ENCODE measurements at regions of chr15 and their contacts with region 1.

Region 1: DNA sequence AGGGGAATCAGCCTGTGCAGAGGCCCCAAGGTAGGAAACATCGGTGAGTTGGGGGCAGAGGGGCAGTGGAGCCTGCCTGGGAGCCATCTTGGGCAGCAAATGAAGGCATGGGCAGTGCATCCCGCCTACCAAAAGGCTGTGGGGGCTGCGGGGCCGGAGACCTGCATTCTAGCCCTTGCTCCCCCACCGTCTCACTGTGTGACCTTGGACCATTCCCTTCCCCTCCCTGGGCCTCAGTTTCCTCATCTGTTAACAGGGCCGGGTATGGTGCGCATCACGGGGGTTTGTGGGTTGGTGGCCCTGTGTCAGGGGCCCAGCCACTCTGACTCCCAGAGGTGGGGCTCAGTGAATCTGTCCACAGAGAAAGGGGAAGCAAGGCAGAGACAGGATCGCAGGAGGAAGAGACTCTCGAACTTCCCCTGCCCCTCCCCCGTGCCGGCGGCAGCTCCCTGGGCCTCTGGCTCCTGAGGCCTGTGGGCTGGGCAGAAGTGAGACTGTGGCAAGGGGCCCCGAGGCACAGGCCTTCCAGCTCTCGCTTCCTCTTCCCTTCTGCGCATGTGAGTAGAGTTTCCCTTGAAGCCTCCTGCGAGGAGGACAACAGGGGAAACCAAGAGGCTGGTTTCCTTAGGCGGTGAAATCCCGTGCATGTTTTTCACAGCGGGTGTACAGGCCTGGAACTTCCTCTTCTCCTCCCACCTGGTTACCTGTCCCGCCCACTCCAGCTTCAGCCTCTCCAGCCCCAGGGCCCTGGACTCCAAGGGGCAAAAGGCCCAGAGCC is 42.9 kb downstream of the IDH2 start:
- DNase-seq: peak; percentile 96
- ATAC-seq: peak; percentile 88
- H3K4me3 ChIP-seq: peak overlapping the region in 1 of 5 experiments; percentile 22
- H3K4me3 Mint-ChIP-seq: peak overlapping the region; percentile 80
- H3K27ac ChIP-seq: peak overlapping the region; percentile 82 to 88
- H3K27ac Mint-ChIP-seq: peak overlapping the region; percentile 98
- H3K4me1 ChIP-seq: peaks cover 54 to 93% of the 10 kb centered on the region in 2 donors
- H3K4me1 Mint-ChIP-seq: peaks cover 81% of the 10 kb centered on the region
- H3K27me3 ChIP-seq: no peaks in the 10 kb centered on the region
- H3K27me3 Mint-ChIP-seq: no peaks in the 10 kb centered on the region
- CTCF ChIP-seq: no peak

Region 2: GRCh38 chr15:89750560-89751542 is 308.5 kb before region 1 on chr15 and contains the start of gene MESP1:
- CTCF ChIA-PET with region 1: no interaction called
- POLR2A ChIA-PET with region 1: no interaction called
- intact Hi-C with region 1: loop called (anchors 1 kb)
- DNase-seq: peak; percentile 93
- ATAC-seq: peak; percentile 96
- H3K4me3 ChIP-seq: peak within 1 kb of the TSS in 4 of 5 experiments; percentile 38 to 75 (median 63)
- H3K4me3 Mint-ChIP-seq: peak within 1 kb of the TSS; percentile 84
- H3K27ac ChIP-seq: peak within 1 kb of the TSS in 1 of 2 donors; percentile 39
- H3K27ac Mint-ChIP-seq: peak within 1 kb of the TSS; percentile 53
- H3K4me1 ChIP-seq: peaks cover 11 to 13% of the 10 kb centered on the region in 2 donors
- H3K4me1 Mint-ChIP-seq: peaks cover 6% of the 10 kb centered on the region
- H3K27me3 ChIP-seq: peaks cover 0 to 10% (median 4%) of the 10 kb centered on the region in 4 experiments
- H3K27me3 Mint-ChIP-seq: peaks cover 19% of the 10 kb centered on the region
- CTCF ChIP-seq: peak; percentile 77
- total RNA-seq, gene MESP1: 0.49 and 0.51 TPM in 2 replicates

Region 3: DNA sequence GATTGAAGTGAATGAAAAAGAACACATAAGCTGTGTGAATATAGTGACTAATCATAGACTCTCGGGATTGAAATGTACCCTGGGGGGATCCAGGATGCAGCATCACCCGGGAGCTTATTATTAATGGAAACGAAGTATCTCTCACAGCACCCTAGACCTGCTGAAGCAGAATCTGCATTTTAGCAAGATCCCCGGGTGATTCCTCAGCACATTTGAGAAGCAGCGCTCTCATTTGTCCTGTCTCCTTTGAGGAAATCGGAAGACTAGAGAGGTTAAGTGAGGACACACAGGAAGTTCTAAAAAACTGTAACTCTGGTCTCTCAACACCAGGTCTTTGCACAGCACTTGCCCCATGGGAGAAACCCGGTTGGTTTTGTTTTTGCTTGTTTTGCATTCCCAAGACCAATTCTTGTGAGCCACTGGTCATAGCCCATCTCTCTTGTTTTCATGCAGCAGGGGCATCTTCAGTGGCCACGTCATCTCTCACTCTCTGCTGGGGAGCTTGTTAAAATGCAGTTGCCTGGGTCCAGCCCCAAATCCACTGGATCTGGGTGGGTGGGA is 28.1 kb before region 1 on chr15:
- CTCF ChIA-PET with region 1: interaction called, 4 read pairs
- POLR2A ChIA-PET with region 1: interaction called, 6 read pairs
- intact Hi-C with region 1: loop called (anchors 1 kb)
- DNase-seq: peak; percentile 55
- ATAC-seq: peak; percentile 87
- H3K4me3 ChIP-seq: peak overlapping the region in 4 of 5 experiments; percentile 12 to 40 (median 32)
- H3K4me3 Mint-ChIP-seq: peak overlapping the region; percentile 78
- H3K27ac ChIP-seq: peak overlapping the region; percentile 5 to 6
- H3K27ac Mint-ChIP-seq: peak overlapping the region; percentile 79
- H3K4me1 ChIP-seq: peaks cover 34 to 43% of the 10 kb centered on the region in 2 donors
- H3K4me1 Mint-ChIP-seq: peaks cover 46% of the 10 kb centered on the region
- H3K27me3 ChIP-seq: no peaks in the 10 kb centered on the region
- H3K27me3 Mint-ChIP-seq: no peaks in the 10 kb centered on the region
- CTCF ChIP-seq: no peak

Region 4: DNA sequence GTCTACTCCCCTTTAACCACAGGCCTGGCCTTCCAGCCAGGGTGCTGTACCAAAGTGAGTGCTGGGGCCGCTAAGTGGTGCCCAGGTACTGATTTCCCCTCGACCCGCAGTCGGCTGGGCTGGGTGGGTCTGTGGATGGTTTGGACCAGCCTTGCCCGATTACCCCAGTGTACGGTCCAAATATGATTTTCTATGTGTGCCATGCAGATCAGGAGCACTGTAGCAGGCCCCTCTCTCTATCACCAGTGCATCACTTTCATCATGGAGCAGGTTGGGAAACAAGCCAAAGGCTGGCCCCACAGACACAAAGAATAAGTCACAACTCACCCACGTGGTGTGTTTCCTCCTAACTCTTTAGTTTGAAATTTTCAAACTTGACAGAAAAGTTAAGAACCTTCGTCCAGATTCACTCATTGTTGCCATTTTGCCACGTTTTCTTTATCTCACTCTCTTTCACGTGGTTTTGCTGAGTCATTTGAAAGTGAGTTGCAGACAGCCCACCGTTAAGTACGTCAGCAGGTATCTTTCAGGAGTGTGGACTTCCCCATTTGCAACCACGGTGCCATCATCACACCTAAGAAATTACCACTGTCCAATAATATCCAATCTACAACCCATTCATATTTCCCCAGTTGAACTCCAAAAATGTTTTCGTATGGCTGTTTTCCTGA is 21.3 kb before region 1 on chr15:
- CTCF ChIA-PET with region 1: interaction called, 9 read pairs
- POLR2A ChIA-PET with region 1: interaction called, 6 read pairs
- intact Hi-C with region 1: loop called (anchors 2 kb)
- DNase-seq: peak; percentile 78
- ATAC-seq: peak; percentile 86
- H3K4me3 ChIP-seq: no peak overlapping the region
- H3K4me3 Mint-ChIP-seq: peak overlapping the region; percentile 61
- H3K27ac ChIP-seq: no peak overlapping the region
- H3K27ac Mint-ChIP-seq: peak overlapping the region; percentile 88
- H3K4me1 ChIP-seq: peaks cover 33 to 46% of the 10 kb centered on the region in 2 donors
- H3K4me1 Mint-ChIP-seq: peaks cover 74% of the 10 kb centered on the region
- H3K27me3 ChIP-seq: no peaks in the 10 kb centered on the region
- H3K27me3 Mint-ChIP-seq: no peaks in the 10 kb centered on the region
- CTCF ChIP-seq: no peak

Region 5: DNA sequence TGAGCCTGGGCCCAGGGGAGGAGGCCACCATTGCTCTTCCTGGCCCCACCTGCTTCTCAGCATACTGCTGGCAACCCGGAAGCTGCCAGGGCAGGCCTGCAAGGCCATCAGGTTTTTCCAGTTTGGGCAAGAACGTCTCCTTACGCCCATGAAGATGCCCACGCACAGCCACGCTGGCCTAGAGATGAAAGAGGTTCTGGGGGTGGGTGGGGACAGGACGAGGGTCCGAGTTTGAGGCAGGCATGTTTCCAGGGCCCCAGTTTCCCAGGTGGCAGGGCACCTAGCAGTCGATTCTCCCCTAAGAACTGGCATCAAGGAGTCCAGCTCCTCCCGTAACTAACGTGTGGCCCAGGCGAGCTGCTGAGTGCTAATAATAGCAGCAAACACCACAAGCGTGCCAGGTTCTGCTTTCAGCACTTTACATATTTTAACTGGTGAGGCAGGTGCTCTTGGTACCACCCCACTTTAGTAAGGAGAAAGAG is 12.4 kb before region 1 on chr15:
- CTCF ChIA-PET with region 1: interaction called, 13 read pairs
- POLR2A ChIA-PET with region 1: interaction called, 6 read pairs
- intact Hi-C with region 1: loop called (anchors 1 kb)
- DNase-seq: peak; percentile 79
- ATAC-seq: peak; percentile 89
- H3K4me3 ChIP-seq: peak overlapping the region in 3 of 5 experiments; percentile 3 to 42 (median 15)
- H3K4me3 Mint-ChIP-seq: peak overlapping the region; percentile 66
- H3K27ac ChIP-seq: peak overlapping the region; percentile 84 to 87
- H3K27ac Mint-ChIP-seq: peak overlapping the region; percentile 94
- H3K4me1 ChIP-seq: peaks cover 40 to 55% of the 10 kb centered on the region in 2 donors
- H3K4me1 Mint-ChIP-seq: peaks cover 62% of the 10 kb centered on the region
- H3K27me3 ChIP-seq: no peaks in the 10 kb centered on the region
- H3K27me3 Mint-ChIP-seq: no peaks in the 10 kb centered on the region
- CTCF ChIP-seq: no peak

Region 6: GRCh38 chr15:90610190-90610589 is 550.8 kb after region 1 on chr15:
- CTCF ChIA-PET with region 1: no interaction called
- POLR2A ChIA-PET with region 1: no interaction called
- intact Hi-C with region 1: no loop called
- DNase-seq: no peak
- ATAC-seq: no peak
- H3K4me3 ChIP-seq: no peak overlapping the region
- H3K4me3 Mint-ChIP-seq: no peak overlapping the region
- H3K27ac ChIP-seq: no peak overlapping the region
- H3K27ac Mint-ChIP-seq: no peak overlapping the region
- H3K4me1 ChIP-seq: peaks cover 0 to 4% of the 10 kb centered on the region in 2 donors
- H3K4me1 Mint-ChIP-seq: peaks cover 6% of the 10 kb centered on the region
- H3K27me3 ChIP-seq: no peaks in the 10 kb centered on the region
- H3K27me3 Mint-ChIP-seq: no peaks in the 10 kb centered on the region
- CTCF ChIP-seq: no peak

Measured in B cell (primary cell).